Activated CD8-positive, alpha-beta memory T cell treated with anti-CD3 and anti-CD28 coated beads, Interleukin-2, amount 10 ng/mL, durations not matched to agents 7 days and 5 days (primary cell): ENCODE measurements at regions of chr7 and their contacts with region 1.

Region 1: GRCh38 chr7:56074371-56074791 is 10.3 kb downstream of the SUMF2 start:
- DNase-seq: peak; percentile 75
- ATAC-seq: peak; percentile 83
- H3K4me3 Mint-ChIP-seq: no peak overlapping the region
- H3K27ac Mint-ChIP-seq: peak overlapping the region; percentile 33
- H3K4me1 Mint-ChIP-seq: peaks cover 3% of the 10 kb centered on the region
- H3K27me3 Mint-ChIP-seq: no peaks in the 10 kb centered on the region

Region 2: GRCh38 chr7:55641273-55641691 is 433.1 kb before region 1 on chr7:
- CTCF ChIA-PET with region 1: interaction called, 20 read pairs
- DNase-seq: peak; percentile 52
- ATAC-seq: peak; percentile 88
- H3K4me3 Mint-ChIP-seq: no peak overlapping the region
- H3K27ac Mint-ChIP-seq: peak overlapping the region; percentile 65
- H3K4me1 Mint-ChIP-seq: peaks cover 14% of the 10 kb centered on the region
- H3K27me3 Mint-ChIP-seq: peaks cover 13% of the 10 kb centered on the region

Region 3: DNA sequence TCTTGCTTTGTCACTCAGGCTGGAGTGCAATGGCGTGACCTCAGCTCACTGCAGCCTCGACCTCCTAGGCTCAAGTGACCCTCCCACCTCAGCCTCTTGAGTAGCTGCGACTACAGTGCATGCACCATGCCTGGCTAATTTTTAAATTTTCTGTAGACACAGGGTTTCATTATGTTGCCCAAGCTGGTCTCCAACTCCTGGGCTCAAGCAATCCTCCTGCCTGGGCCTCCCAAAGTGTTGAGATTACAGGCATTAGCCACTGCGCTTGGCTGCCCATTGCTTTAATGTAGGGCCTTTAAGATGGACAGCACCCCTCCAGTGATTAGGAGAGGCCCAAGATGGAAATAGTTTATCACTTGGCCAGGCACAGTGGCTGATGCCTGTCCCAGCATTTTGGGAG is 70.6 kb before region 1 on chr7:
- CTCF ChIA-PET with region 1: interaction called, 18 read pairs
- DNase-seq: no peak
- ATAC-seq: no peak
- H3K4me3 Mint-ChIP-seq: no peak overlapping the region
- H3K27ac Mint-ChIP-seq: no peak overlapping the region
- H3K4me1 Mint-ChIP-seq: peaks cover 5% of the 10 kb centered on the region
- H3K27me3 Mint-ChIP-seq: no peaks in the 10 kb centered on the region

Region 4: DNA sequence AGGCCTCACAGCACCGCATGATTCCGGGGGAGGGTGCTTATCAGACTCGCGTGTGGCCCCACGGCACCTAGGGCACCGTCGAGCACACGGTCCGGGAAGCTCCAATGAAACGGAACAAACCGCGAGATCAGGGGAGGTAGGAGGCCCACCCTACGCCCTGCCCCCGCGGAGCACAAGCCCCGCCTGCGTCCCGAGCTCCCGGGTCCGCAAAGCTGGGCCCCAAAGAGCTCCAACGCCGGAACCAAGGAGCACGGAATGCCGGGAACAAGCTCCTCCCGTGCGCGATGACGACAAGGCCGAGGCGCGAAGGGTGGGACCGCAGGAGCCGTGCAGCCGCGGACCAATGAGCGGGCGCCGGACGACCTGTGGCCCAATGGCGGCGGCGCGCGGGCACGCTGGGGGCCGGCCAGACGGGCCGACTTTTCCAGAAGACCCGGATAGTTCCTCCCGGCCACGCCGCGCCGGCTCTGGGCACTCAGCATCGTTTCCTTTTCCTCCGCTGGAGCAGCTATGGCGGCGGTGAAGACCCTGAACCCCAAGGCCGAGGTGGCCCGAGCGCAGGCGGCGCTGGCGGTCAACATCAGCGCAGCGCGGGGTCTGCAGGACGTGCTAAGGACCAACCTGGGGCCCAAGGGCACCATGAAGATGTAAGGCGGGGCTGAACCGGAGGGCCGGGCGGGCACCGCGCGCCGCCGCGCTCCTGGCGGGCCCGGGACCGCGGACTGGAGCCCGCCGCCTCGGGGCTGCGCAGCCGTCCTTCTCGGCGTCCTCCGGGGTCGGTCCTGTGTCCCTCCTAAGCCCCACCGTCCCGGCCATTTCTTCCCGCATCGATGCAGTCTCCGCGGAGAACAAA is 22.8 kb before region 1 on chr7 and contains the starts of genes CCT6A and PSPH:
- CTCF ChIA-PET with region 1: interaction called, 11 read pairs
- DNase-seq: peak; percentile 93
- ATAC-seq: peak; percentile 96
- H3K4me3 Mint-ChIP-seq: peak within 1 kb of the TSS; percentile 87
- H3K27ac Mint-ChIP-seq: peak within 1 kb of the TSS; percentile 87
- H3K4me1 Mint-ChIP-seq: peaks cover 50% of the 10 kb centered on the region
- H3K27me3 Mint-ChIP-seq: no peaks in the 10 kb centered on the region
- total RNA-seq, gene CCT6A: 120 to 181 TPM
- total RNA-seq, gene PSPH: 12.4 to 22.2 TPM